Ovary (tissue), 10 donors: ENCODE measurements at regions of chr17 and their contacts with region 1.

Region 1: DNA sequence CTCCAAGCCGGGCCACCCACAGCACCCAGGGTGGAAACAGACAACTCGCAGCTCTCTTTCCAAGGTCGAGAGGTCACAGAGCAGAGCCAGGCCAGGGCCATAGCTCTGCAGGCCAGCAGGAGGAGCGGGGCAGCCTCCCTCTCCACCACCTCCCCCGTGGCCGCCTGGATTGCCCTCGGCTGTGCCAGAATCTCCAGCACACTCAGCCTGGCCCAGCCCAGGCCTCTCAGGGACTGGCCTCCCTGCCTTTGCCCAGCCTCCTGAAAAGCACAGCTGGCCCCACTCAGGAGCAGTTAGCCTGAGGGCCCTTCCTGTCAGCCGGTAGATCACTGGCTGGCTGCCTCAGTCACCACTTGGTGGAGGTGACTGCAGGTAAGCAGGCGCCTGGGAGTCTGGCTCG is 85.8 kb upstream of the SEC14L1 start:
- DNase-seq: no peak
- H3K4me3 ChIP-seq: no peak overlapping the region
- H3K27ac ChIP-seq: no peak overlapping the region
- H3K4me1 ChIP-seq: no peaks in the 10 kb centered on the region
- H3K27me3 ChIP-seq: no peaks in the 10 kb centered on the region
- CTCF ChIP-seq: no peak
- EP300 ChIP-seq: no peak
- POLR2A ChIP-seq: no peak

Region 2: DNA sequence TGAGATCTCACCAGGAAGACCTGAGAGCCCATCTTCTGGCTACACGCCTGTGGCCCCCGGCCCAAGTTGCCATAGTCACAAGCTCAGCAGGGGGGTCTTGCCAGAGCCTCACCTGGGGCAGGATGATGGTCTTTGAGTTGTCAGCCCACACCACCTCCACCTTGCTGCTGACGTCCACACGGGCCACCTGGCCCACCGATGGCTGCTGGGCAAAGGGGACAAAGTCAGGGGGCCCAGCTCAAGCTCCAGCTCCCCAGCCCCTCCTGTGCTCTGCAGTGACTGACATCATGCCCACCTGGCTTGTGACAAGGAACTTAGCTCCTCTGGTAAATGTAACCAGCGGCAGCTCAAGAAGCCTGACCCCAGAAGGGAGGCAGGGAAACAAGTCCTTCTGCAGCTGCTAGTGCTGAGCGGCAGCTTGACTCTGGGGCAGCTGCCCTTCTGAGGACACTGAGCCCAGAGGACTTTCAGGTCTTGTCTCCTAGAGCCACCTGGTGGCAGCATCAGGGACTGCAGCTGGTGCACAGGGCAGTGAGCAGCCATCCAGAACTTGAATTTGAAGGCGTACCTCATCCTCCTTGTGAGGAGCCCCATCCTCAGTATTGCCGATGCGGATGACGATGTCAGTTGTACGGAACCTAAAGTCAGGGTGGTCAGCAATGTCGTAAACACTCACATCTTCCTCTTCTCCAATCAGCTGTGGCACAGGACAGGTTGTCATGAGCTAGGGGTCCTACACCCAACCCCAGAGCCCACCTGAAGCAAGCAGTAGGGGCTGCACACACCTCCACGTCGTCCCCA is 657.0 kb before region 1 on chr17:
- intact Hi-C with region 1: loop called in 1 of 4 experiments (anchors 10 kb)
- DNase-seq: peak; percentile 80 to 92 (median 90)
- H3K4me3 ChIP-seq: no peak overlapping the region
- H3K27ac ChIP-seq: no peak overlapping the region
- H3K4me1 ChIP-seq: no peaks in the 10 kb centered on the region
- H3K27me3 ChIP-seq: no peaks in the 10 kb centered on the region
- CTCF ChIP-seq: peak; percentile 91 to 96 (median 92)
- EP300 ChIP-seq: no peak
- POLR2A ChIP-seq: no peak

Region 3: GRCh38 chr17:76879691-76880090 is 175.2 kb before region 1 on chr17:
- intact Hi-C with region 1: no loop called
- DNase-seq: no peak
- H3K4me3 ChIP-seq: no peak overlapping the region
- H3K27ac ChIP-seq: no peak overlapping the region
- H3K4me1 ChIP-seq: no peaks in the 10 kb centered on the region
- H3K27me3 ChIP-seq: no peaks in the 10 kb centered on the region
- CTCF ChIP-seq: no peak
- EP300 ChIP-seq: no peak
- POLR2A ChIP-seq: no peak

Region 4: GRCh38 chr17:77109764-77110359 is 54.9 kb after region 1 on chr17:
- intact Hi-C with region 1: no loop called
- DNase-seq: no peak
- H3K4me3 ChIP-seq: no peak overlapping the region
- H3K27ac ChIP-seq: peak overlapping the region in 1 of 2 donors; percentile 43
- H3K4me1 ChIP-seq: peaks cover 9% of the 10 kb centered on the region
- H3K27me3 ChIP-seq: no peaks in the 10 kb centered on the region
- CTCF ChIP-seq: peak in 2 of 3 donors; percentile 22 to 35
- EP300 ChIP-seq: peak; percentile 34
- POLR2A ChIP-seq: no peak